ENCODE measurements at regions of chrX and their contacts with region 1.

Region 1: GRCh38 chrX:38166478-38167083 is 54.1 kb downstream of the SRPX start:
- DNase-seq: no peak
- H3K4me3 ChIP-seq: no peak overlapping the region
- H3K27ac ChIP-seq: no peak overlapping the region
- H3K27me3 ChIP-seq: no peaks in the 10 kb centered on the region
- CTCF ChIP-seq: peak; percentile 44

Region 2: GRCh38 chrX:37825209-37825842 is 341.3 kb before region 1 on chrX:
- CTCF ChIA-PET with region 1: interaction called, 10 read pairs
- POLR2A ChIA-PET with region 1: no interaction called
- DNase-seq: no peak
- H3K4me3 ChIP-seq: no peak overlapping the region
- H3K27ac ChIP-seq: no peak overlapping the region
- H3K27me3 ChIP-seq: no peaks in the 10 kb centered on the region
- CTCF ChIP-seq: peak; percentile 86

Region 3: GRCh38 chrX:37926700-37927099 is 239.9 kb before region 1 on chrX:
- CTCF ChIA-PET with region 1: interaction called, 78 read pairs
- POLR2A ChIA-PET with region 1: no interaction called
- DNase-seq: no peak
- H3K4me3 ChIP-seq: no peak overlapping the region
- H3K27ac ChIP-seq: no peak overlapping the region
- H3K27me3 ChIP-seq: no peaks in the 10 kb centered on the region
- CTCF ChIP-seq: peak; percentile 55

Region 4: GRCh38 chrX:38282044-38282443 is 115.5 kb after region 1 on chrX:
- CTCF ChIA-PET with region 1: interaction called, 11 read pairs
- POLR2A ChIA-PET with region 1: no interaction called
- DNase-seq: no peak
- H3K4me3 ChIP-seq: no peak overlapping the region
- H3K27ac ChIP-seq: no peak overlapping the region
- H3K27me3 ChIP-seq: no peaks in the 10 kb centered on the region
- CTCF ChIP-seq: peak; percentile 61